ENCODE measurements at regions of chr7 and their contacts with region 1.

Region 1: GRCh38 chr7:30564243-30564892 is 30.3 kb upstream of the GARS1 start:
- DNase-seq: peak; percentile 65
- ATAC-seq: peak; percentile 97
- H3K4me3 Mint-ChIP-seq: no peak overlapping the region
- H3K27ac Mint-ChIP-seq: no peak overlapping the region
- H3K4me1 Mint-ChIP-seq: no peaks in the 10 kb centered on the region
- H3K27me3 Mint-ChIP-seq: no peaks in the 10 kb centered on the region
- CTCF ChIP-seq: peak; percentile 38

Region 2: GRCh38 chr7:29639881-29640595 is 924.3 kb before region 1 on chr7:
- CTCF ChIA-PET with region 1: no interaction called
- POLR2A ChIA-PET with region 1: no interaction called
- intact Hi-C with region 1: loop called (anchors 2 kb)
- DNase-seq: no peak
- ATAC-seq: no peak
- H3K4me3 Mint-ChIP-seq: no peak overlapping the region
- H3K27ac Mint-ChIP-seq: no peak overlapping the region
- H3K4me1 Mint-ChIP-seq: no peaks in the 10 kb centered on the region
- H3K27me3 Mint-ChIP-seq: no peaks in the 10 kb centered on the region
- CTCF ChIP-seq: no peak

Region 3: DNA sequence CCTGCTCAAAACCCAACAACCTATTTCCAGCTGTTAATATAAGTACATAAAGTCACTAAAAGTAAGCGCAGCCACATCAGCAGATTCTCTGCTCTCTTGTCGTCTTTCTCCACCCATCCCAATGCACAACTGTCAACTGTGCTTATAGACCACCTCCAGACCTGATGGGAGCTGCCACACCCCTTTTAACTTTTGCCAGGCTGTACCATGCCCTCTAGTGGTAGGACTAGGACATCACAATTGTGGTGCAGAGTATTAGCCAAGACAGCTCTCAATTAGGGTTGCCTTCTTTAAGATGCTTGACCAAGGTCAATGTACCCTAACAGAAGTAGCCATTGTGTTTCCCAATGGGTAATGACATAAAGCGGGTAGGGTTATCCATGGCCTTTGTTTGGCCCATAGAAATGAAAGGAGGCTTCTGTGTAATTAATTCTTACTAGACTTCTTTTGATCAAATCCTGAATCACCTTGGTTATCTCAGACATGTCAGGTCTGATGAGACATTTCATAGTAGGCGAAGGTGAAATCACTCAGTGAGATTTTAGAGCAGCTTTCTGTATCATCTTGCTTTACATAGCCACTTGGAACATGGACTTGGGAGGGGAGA is 642.9 kb before region 1 on chr7:
- CTCF ChIA-PET with region 1: interaction called, 8 read pairs
- POLR2A ChIA-PET with region 1: no interaction called
- intact Hi-C with region 1: loop called (anchors 2 kb)
- DNase-seq: no peak
- ATAC-seq: peak; percentile 97
- H3K4me3 Mint-ChIP-seq: no peak overlapping the region
- H3K27ac Mint-ChIP-seq: no peak overlapping the region
- H3K4me1 Mint-ChIP-seq: no peaks in the 10 kb centered on the region
- H3K27me3 Mint-ChIP-seq: no peaks in the 10 kb centered on the region
- CTCF ChIP-seq: no peak

Region 4: DNA sequence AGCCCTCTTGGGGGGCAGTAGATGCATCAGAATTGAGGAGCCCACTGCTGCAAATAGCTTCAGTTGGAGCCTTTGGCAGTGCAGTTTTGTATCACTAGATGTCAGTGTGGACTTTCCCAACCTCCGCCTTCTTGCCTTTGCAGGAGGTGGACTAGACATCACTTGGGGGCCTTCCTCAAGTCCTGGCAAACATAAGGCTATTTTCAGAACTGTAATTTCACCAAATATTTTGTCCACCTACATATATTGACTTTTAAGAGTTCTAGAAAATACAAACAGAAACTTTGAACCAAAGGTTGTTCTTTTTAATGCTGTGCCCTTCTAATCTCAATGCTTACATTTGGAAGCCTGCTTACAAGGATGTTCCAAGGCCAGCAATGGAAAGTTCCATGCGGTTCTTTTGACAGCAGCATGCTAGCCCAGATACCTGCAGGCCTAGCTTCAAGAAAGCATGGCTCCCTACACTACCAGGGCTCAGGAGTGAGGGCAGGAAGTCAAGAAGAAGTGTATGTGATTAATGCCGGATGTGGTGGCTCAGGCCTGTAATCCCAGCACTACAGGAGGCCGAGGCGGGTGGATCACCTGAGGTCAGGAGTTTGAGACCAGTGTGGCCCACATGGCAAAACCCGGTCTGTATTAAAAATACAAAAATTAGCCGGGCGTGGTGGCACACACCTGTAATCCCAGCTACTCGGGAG is 288.0 kb before region 1 on chr7:
- CTCF ChIA-PET with region 1: interaction called, 57 read pairs
- POLR2A ChIA-PET with region 1: no interaction called
- intact Hi-C with region 1: loop called (anchors 1 kb)
- DNase-seq: no peak
- ATAC-seq: peak; percentile 78
- H3K4me3 Mint-ChIP-seq: no peak overlapping the region
- H3K27ac Mint-ChIP-seq: no peak overlapping the region
- H3K4me1 Mint-ChIP-seq: peaks cover 16% of the 10 kb centered on the region
- H3K27me3 Mint-ChIP-seq: no peaks in the 10 kb centered on the region
- CTCF ChIP-seq: no peak

Region 5: DNA sequence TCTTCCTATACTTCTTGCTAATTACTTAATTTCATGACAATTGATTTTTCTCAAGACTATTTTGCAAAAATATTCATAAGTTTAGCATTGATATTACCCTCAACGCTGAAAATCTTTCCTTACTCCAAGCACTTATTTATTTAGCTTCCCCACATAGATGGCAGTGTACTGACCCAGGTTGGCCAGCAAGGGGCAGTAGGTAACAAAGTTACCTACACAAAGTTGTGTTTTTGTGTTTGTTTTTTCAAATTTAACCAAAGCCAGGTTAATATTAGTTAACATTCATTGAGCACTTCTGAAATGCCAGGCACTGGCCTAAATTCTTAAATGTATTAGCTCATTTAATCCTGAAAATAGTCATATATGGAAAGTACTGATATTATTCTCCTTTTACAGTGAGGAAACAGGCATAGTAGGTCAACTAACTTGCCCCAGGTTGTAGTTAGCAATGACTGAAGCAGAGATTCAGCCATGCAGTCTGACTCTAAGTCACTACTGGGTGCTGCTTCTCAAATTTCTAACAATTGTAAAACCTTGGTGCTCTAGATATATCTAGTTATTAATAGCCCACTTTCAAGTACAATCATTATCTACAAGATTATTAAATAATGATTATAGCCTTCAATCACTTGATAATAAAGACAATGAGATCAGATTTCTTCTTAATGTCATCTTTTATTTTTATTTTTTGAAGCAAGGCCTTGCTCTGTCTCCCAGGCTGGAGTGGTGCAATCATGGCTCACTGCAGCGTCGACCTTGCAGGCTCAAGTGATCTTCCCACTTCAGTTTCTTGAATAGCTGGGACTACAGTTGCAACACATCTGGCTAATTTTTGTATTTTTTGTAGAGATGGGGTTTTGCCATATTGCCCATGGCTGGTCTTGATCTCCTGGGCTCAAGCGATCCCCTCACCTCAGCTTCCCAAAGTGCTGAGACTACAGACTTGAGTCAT is 54.0 kb before region 1 on chr7:
- CTCF ChIA-PET with region 1: interaction called, 25 read pairs
- POLR2A ChIA-PET with region 1: no interaction called
- intact Hi-C with region 1: loop called (anchors 1 kb)
- DNase-seq: no peak
- ATAC-seq: peak; percentile 72
- H3K4me3 Mint-ChIP-seq: no peak overlapping the region
- H3K27ac Mint-ChIP-seq: no peak overlapping the region
- H3K4me1 Mint-ChIP-seq: peaks cover 5% of the 10 kb centered on the region
- H3K27me3 Mint-ChIP-seq: no peaks in the 10 kb centered on the region
- CTCF ChIP-seq: peak; percentile 42

Measured in activated B cell treated with CpG ODN at 0.5 μM for 24 hours (primary cell).